ENCODE measurements at regions of chr12 and their contacts with region 1.

Region 1: DNA sequence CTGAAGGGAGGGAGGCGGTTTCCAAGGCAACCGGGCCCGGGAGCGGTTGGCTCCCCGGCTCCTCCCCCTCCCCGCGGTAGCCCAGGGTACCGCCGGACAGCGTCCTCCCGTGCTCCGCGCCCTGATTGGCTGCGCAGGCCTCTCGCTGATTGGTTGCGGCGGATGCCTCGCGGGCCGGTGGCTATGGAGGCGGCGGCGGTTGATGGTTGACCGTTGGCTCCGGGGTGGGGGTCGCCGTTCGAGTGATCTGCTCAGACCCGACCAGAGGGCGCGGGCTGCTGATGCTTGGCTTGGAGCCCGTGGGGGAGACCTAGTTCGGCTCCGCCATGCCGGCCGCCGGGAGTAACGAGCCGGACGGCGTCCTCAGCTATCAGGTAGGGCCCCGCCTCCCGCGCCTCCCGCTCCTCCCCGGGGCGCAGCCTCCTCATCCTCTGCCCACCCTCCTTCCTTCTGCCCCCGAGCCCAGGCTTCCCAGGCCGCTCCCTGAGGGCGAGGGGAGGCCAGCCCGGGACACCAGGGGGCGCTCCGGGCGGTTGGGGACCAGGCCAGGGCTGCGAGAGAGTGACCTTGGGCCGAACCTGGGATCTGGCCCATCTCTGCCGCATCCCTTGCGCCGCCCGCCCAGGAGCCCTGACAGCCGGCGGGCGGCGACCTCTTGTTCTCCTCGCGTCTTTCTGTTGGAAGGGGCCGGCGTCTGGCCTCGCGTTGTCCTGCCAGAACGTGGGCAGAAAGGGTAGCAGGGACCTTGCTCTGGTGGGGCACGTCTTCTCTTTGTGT is at the start of gene SLC4A8:
- DNase-seq: peak; percentile 81 to 88
- ATAC-seq: peak; percentile 67 to 91 (median 80)
- H3K4me3 ChIP-seq: peak within 1 kb of the TSS; percentile 63
- H3K27ac ChIP-seq: no peak within 1 kb of the TSS
- H3K4me1 ChIP-seq: no peaks in the 10 kb centered on the region
- H3K27me3 ChIP-seq: peaks cover 0 to 44% (median 12%) of the 10 kb centered on the region in 3 donors
- CTCF ChIP-seq: peak; percentile 53
- total RNA-seq, gene SLC4A8: 0.02 to 0.91 (median 0.16) TPM in 3 of 4 donors, not detected in the other

Region 2: GRCh38 chr12:51531978-51532497 is 107.2 kb after region 1 on chr12:
- intact Hi-C with region 1: loop called (anchors 2 to 5 kb)
- DNase-seq: peak; percentile 64 to 74
- ATAC-seq: peak; percentile 78 to 89 (median 84)
- H3K4me3 ChIP-seq: no peak overlapping the region
- H3K27ac ChIP-seq: no peak overlapping the region
- H3K4me1 ChIP-seq: no peaks in the 10 kb centered on the region
- H3K27me3 ChIP-seq: peaks cover 0 to 27% (median 2%) of the 10 kb centered on the region in 3 donors
- CTCF ChIP-seq: peak; percentile 82

Region 3: GRCh38 chr12:51823875-51824565 is 399.2 kb after region 1 on chr12:
- intact Hi-C with region 1: loop called in 1 of 2 experiments (anchors 2 kb)
- DNase-seq: no peak
- ATAC-seq: no peak
- H3K4me3 ChIP-seq: no peak overlapping the region
- H3K27ac ChIP-seq: no peak overlapping the region
- H3K4me1 ChIP-seq: no peaks in the 10 kb centered on the region
- H3K27me3 ChIP-seq: peaks cover 0 to 48% (median 13%) of the 10 kb centered on the region in 3 donors
- CTCF ChIP-seq: peak; percentile 46

Region 4: DNA sequence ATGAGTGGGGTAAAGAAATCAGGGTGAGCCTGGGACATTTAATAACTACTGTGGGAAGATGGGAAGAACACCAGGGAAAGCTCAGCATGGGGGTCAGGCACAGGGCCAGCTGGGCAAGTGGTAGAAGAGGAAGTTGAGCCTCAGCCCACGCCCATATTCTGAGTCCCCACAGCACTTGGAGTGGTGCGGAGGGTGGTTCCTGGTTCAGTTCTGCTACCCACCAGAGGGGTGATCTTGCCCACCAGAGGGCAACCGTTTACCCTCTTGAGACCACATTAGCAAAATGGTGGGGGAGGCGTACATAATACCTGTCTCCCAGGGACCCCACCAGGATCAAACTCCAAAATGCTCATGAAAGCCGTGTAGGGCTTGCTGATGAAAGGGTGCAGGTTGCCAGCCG is 446.3 kb after region 1 on chr12:
- intact Hi-C with region 1: loop called in 1 of 2 experiments (anchors 5 kb)
- DNase-seq: peak; percentile 48 to 60
- ATAC-seq: no peak
- H3K4me3 ChIP-seq: no peak overlapping the region
- H3K27ac ChIP-seq: no peak overlapping the region
- H3K4me1 ChIP-seq: no peaks in the 10 kb centered on the region
- H3K27me3 ChIP-seq: peaks cover 0 to 43% (median 3%) of the 10 kb centered on the region in 3 donors
- CTCF ChIP-seq: no peak